HepG2 (cell line): ENCODE measurements at regions of chr6 and their contacts with region 1.

Region 1: DNA sequence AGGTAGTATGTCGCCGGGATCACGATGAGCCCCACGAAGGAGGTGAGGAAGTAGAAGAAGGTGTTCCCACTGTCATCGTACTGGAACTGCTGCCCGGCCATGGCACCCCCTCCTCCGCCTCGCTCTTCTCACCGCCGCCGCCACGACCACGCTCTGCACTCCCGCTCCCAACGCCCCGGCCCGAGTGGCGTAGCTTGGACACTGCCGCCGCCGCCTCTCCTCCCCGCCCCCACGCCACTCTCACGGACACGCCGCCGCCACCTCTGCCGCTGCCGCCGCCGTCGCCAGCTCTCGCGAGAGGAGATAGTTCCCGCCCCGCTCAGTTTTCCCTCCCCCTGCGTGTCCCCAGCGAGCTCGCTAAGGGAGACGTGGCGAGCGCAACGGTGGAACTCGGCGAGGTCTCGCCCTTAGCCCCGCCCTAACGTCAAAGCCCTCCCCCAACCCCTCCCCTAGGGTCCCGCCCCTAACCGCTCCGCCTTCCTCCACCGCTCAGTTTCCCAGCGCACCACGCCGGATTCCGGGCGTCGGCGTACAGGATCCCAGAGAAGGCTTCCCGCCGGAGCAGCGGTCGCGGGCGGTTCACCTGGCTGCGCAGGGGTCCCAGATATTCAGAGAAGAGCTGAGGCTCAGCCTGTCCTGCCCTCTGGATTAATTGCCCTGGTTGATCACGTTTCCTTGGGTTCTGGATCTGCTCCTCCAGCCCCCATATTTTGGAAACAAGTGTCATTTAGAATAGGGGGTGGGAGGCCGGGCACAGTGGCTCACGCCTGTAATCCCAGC is at the start of gene SEC63:
- DNase-seq: peak; percentile 92
- ATAC-seq: peak; percentile 89
- H3K4me3 ChIP-seq: peak within 1 kb of the TSS; percentile 87 to 99 (median 94)
- H3K27ac ChIP-seq: peak within 1 kb of the TSS; percentile 89
- H3K4me1 ChIP-seq: peaks cover 41% of the 10 kb centered on the region
- H3K27me3 ChIP-seq: no peaks in the 10 kb centered on the region; a peak in 1 of 5 replicates
- CTCF ChIP-seq: 0 out of 2 replicates have a peak, but pooled peaks have one; percentile 5
- EP300 ChIP-seq: no peak
- POLR2A ChIP-seq: peak; percentile 81 to 85
- RAD21 ChIP-seq: peak; percentile 52; the same call in 1 of the 2 replicates
- total RNA-seq, gene SEC63: 17.5 and 20.2 TPM in 2 replicates

Region 2: GRCh38 chr6:107185391-107185970 is 772.6 kb before region 1 on chr6:
- CTCF ChIA-PET with region 1: no interaction called
- POLR2A ChIA-PET with region 1: no interaction called
- in situ Hi-C with region 1: no loop called
- intact Hi-C with region 1: no loop called
- DNase-seq: peak; percentile 29
- ATAC-seq: peak; percentile 94
- H3K4me3 ChIP-seq: no peak overlapping the region
- H3K27ac ChIP-seq: no peak overlapping the region
- H3K4me1 ChIP-seq: no peaks in the 10 kb centered on the region
- H3K27me3 ChIP-seq: no peaks in the 10 kb centered on the region
- CTCF ChIP-seq: peak; percentile 65
- EP300 ChIP-seq: no peak
- POLR2A ChIP-seq: no peak
- RAD21 ChIP-seq: no peak

Region 3: DNA sequence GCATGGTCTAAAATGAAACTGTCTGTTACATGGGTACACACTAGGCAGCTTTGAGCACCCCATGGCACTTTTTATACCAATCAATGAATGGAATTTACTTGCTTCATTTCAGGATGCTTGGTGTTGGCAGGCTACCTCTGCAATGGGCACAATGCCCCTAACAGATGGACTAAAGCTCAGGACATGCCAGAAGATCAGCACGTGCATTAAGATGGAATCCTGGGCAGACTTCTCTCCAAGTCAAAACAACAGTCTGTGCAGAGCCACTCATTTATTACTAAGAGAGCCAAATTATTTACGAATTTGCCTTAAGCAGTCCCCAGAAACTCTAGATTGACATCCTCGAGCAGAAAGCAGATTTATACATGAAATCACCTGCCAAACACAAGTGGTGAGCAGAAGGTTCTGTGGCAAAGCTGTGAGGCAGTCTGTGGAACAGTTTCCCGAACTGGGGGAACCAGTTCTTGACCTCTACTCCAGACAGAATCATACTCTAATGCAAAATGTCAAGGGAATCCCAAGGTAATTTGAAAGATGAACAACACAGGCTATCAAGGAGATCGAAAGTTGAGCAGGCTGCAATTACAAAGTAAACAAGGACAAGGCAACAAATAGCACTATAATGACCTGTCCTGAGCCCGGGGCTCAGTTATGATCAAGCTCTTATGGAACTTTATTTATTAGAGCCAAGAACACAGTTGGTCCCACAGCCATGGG is 78.0 kb before region 1 on chr6:
- CTCF ChIA-PET with region 1: no interaction called
- POLR2A ChIA-PET with region 1: interaction called, 3 read pairs
- in situ Hi-C with region 1: no loop called
- intact Hi-C with region 1: loop called (anchors 10 kb)
- DNase-seq: no peak
- ATAC-seq: no peak
- H3K4me3 ChIP-seq: no peak overlapping the region
- H3K27ac ChIP-seq: no peak overlapping the region
- H3K4me1 ChIP-seq: peaks cover 25% of the 10 kb centered on the region
- H3K27me3 ChIP-seq: no peaks in the 10 kb centered on the region
- CTCF ChIP-seq: no peak
- EP300 ChIP-seq: no peak
- POLR2A ChIP-seq: no peak
- RAD21 ChIP-seq: no peak

Region 4: DNA sequence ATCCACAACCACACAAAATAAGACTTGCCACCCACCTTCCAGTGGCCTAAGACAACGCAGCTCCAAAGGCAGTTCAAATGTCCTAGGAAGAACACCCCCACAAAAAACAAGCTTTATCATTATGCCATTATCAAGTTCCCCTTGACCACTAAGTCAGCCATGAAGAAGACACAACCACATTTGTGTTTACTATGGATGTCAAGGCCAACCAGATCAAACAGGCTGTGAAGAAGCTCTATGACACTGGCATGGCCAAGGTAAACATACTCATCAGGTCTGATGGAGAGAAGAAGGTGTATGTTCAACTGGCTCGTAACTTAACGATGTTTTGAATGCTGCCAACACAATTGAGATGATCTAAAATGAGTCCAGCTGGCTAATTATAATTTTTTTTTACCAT is 26.2 kb before region 1 on chr6:
- CTCF ChIA-PET with region 1: no interaction called
- POLR2A ChIA-PET with region 1: interaction called, 13 read pairs
- in situ Hi-C with region 1: no loop called
- intact Hi-C with region 1: no loop called
- DNase-seq: peak; percentile 86
- ATAC-seq: peak; percentile 90
- H3K4me3 ChIP-seq: no peak overlapping the region; a peak in 1 of 6 replicates
- H3K27ac ChIP-seq: no peak overlapping the region
- H3K4me1 ChIP-seq: peaks cover 40% of the 10 kb centered on the region
- H3K27me3 ChIP-seq: no peaks in the 10 kb centered on the region
- CTCF ChIP-seq: no peak
- EP300 ChIP-seq: peak in 1 of 2 experiments; percentile 75; a peak in 2 of 4 replicates
- POLR2A ChIP-seq: no peak
- RAD21 ChIP-seq: no peak

Region 5: DNA sequence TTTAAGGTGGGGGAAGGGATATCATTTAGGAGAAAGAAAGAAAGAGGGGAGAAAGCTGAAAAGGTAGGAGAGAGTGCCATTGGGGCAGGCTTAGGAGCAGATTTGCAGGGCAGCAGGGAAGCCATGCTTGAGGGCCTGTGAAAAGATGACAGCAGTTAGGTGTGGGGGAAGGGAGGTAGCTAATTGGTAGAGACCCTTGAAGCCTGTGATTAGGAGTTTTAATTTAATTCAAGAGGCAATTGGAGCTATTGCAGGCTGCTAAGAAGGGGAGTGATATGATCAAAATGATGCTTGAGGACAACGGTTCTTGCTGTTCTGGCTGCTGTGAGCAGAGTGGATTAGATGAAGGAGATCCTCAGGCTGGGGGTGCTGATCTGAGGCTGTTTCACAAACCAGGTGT is 24.4 kb after region 1 on chr6:
- CTCF ChIA-PET with region 1: no interaction called
- POLR2A ChIA-PET with region 1: no interaction called
- in situ Hi-C with region 1: no loop called
- intact Hi-C with region 1: no loop called
- DNase-seq: no peak
- ATAC-seq: no peak
- H3K4me3 ChIP-seq: no peak overlapping the region
- H3K27ac ChIP-seq: no peak overlapping the region
- H3K4me1 ChIP-seq: 0 out of 2 replicates have a peak, but pooled peaks cover 1% of the 10 kb centered on the region
- H3K27me3 ChIP-seq: no peaks in the 10 kb centered on the region; a peak in 1 of 5 replicates
- CTCF ChIP-seq: no peak
- EP300 ChIP-seq: no peak
- POLR2A ChIP-seq: no peak
- RAD21 ChIP-seq: no peak

Region 6: DNA sequence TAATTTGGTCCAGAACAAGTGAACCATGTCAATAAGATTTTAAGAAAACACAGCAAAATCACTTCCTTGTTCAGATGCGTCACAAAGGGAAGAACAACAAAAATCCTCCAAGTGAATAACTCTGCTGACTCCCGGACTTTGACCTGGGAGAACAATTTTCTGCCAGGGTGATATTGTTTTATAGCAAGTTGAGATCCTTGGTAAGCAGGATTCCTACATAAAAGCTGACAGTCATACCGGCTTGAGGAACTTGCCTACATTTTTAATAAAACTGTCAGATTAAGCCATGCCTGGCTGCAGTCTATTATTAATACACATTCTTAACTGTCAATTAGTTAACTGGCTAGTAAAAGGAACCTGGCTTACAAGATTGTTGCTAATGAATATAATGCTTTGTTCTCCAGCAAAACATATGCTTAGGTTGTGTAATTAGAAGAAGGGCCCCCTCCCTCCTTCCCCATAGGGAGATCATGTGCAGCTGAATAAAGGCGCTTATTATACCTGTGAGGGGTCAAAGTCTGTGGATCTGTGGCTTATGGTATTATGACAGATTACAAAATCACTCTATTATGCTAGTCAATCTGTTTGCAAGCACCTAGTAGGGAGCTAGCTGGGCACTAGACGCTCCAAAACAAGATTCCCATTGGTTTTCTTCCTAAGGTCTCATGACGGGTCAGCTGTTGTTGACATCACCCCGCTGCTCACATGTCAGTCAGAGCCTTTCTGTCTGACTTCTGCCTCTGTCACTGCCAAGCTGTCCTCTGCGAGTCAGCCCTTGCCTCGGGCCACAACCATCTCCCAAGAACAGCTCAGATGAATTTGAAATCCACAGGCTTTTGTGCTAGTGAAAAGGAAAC is 44.5 kb after region 1 on chr6:
- CTCF ChIA-PET with region 1: no interaction called
- POLR2A ChIA-PET with region 1: interaction called, 15 read pairs
- in situ Hi-C with region 1: no loop called
- intact Hi-C with region 1: loop called (anchors 2 kb)
- DNase-seq: peak; percentile 98
- ATAC-seq: peak; percentile 80
- H3K4me3 ChIP-seq: peak overlapping the region in 2 of 3 experiments; percentile 55 to 58; a peak in 5 of 6 replicates
- H3K27ac ChIP-seq: peak overlapping the region; percentile 93
- H3K4me1 ChIP-seq: peaks cover 62% of the 10 kb centered on the region
- H3K27me3 ChIP-seq: no peaks in the 10 kb centered on the region
- CTCF ChIP-seq: no peak
- EP300 ChIP-seq: peak in 1 of 2 experiments; percentile 76; a peak in 2 of 4 replicates
- POLR2A ChIP-seq: peak; percentile 35 to 69; a peak in 3 of 4 replicates
- RAD21 ChIP-seq: no peak

Region 7: DNA sequence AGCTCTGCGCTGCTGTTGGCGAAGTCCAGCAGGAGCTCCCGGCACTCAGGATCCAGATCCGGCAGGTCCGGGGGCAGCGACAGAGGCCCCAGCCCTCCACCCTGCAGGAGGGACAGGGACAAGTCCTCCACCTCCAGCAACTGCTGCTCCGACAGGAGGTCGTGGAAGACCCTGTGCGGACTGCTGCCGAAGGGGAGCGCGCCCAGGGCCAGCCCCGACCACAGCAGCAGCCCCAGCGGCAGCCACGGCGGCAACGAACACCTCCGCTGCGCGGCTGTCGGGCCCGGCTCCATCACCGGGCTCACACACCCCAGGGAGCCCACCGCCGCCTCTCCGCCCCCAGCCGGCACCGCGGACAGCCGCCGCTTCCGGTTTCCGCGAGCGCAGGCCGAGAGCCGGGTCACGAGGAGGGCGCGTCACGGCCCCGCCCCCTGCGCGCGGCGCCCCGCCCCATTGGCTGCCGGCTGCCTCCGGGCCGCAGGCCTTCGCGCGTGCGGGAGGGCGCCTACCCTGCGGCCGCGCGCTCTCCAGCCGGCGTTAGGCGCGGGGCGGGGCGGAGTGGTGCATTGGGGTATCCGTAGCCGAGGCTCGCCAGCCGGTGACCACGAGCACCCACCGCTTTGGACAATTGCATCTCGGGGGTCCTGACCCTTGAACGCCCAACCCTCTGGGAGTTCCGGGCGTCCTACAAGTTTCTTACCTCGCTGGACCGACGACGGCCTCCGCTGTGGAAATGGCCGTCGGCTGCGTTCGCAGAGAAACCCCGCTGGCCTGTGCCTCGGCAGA is 116.5 kb after region 1 on chr6 and contains the start of gene OSTM1:
- CTCF ChIA-PET with region 1: no interaction called
- POLR2A ChIA-PET with region 1: no interaction called
- in situ Hi-C with region 1: no loop called
- intact Hi-C with region 1: loop called (anchors 1 kb)
- DNase-seq: peak; percentile 77
- ATAC-seq: peak; percentile 98
- H3K4me3 ChIP-seq: peak within 1 kb of the TSS; percentile 93 to 99 (median 97)
- H3K27ac ChIP-seq: peak within 1 kb of the TSS; percentile 58
- H3K4me1 ChIP-seq: peaks cover 28% of the 10 kb centered on the region
- H3K27me3 ChIP-seq: peaks cover 0 to 4% of the 10 kb centered on the region in 2 experiments; a peak in 2 of 5 replicates
- CTCF ChIP-seq: 0 out of 2 replicates have a peak, but pooled peaks have one; percentile 6
- EP300 ChIP-seq: no peak
- POLR2A ChIP-seq: peak; percentile 66 to 79
- RAD21 ChIP-seq: peak; percentile 29; the same call in 1 of the 2 replicates
- total RNA-seq, gene OSTM1: 13.9 and 20.5 TPM in 2 replicates

Region 8: DNA sequence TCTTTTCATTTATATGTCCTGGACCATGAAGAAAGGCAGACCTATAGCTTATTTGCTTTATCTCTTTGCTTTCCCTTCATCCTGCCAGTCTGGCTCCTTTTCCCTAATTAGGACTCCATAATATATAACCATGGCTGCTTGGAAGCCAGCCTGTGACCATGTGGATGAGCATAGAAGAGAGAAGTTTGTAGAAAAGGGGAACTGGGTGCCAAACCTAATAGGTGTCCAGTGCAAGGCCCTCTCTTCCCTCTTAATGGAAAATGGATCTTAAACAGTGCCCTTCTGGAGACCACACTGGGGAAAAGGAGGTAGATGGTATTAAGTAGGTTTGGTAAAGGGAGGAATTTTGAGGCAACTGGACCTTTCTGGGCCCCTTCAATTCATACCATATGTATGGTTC is 133.2 kb after region 1 on chr6:
- CTCF ChIA-PET with region 1: no interaction called
- POLR2A ChIA-PET with region 1: no interaction called
- in situ Hi-C with region 1: no loop called
- intact Hi-C with region 1: no loop called
- DNase-seq: no peak
- ATAC-seq: no peak
- H3K4me3 ChIP-seq: no peak overlapping the region
- H3K27ac ChIP-seq: no peak overlapping the region
- H3K4me1 ChIP-seq: no peaks in the 10 kb centered on the region
- H3K27me3 ChIP-seq: 0 out of 5 replicates have a peak, but pooled peaks cover 0 to 2% of the 10 kb centered on the region in 2 experiments
- CTCF ChIP-seq: no peak
- EP300 ChIP-seq: no peak
- POLR2A ChIP-seq: no peak
- RAD21 ChIP-seq: no peak